B cell (primary cell): ENCODE measurements at regions of chr1 and their contacts with region 1.

Region 1: DNA sequence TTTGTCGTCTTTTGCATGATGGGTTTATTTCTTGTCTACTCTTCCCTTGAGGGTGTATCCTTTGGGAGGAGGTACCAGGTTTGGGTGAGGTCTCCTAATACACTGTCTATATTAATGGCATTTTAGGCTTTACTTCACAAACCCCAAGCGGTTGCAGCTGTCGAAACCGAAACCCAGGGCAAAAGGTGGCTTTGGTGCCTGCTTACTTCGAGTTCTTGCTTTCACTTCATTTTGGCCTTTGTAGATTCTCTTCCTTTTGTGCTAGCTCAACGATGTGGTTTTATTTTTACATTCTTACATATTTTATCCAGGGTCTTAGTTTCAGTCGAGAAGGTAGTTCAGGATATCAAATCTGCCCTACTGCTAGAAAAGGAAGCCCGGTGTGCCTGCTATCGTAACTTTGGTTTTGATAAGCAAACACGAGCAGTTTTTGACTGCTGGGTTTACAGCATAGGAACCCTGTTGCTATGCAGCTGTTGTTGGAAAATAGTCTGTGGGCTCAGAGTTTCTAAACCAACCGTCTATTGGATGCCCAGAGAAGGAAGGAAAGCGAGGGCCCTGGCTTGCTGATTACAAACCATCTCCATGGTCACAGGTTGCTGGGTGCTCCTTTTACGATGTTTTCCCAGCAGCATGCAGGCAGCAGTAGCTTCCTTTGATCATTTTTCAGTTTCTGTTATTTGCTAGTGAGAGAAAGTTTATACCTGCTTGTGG is 9.8 kb upstream of the TSPAN2 start:
- DNase-seq: peak; percentile 83
- ATAC-seq: peak; percentile 82
- H3K4me3 ChIP-seq: peak overlapping the region; percentile 52 to 89 (median 58)
- H3K4me3 Mint-ChIP-seq: peak overlapping the region; percentile 92
- H3K27ac ChIP-seq: peak overlapping the region; percentile 97 to 98
- H3K27ac Mint-ChIP-seq: peak overlapping the region; percentile 97
- H3K4me1 ChIP-seq: peaks cover 15 to 20% of the 10 kb centered on the region in 2 donors
- H3K4me1 Mint-ChIP-seq: peaks cover 28% of the 10 kb centered on the region
- H3K27me3 ChIP-seq: no peaks in the 10 kb centered on the region
- H3K27me3 Mint-ChIP-seq: no peaks in the 10 kb centered on the region
- CTCF ChIP-seq: no peak

Region 2: GRCh38 chr1:114979278-114979891 is 119.8 kb before region 1 on chr1:
- CTCF ChIA-PET with region 1: interaction called, 8 read pairs
- POLR2A ChIA-PET with region 1: no interaction called
- intact Hi-C with region 1: loop called (anchors 5 kb)
- DNase-seq: peak; percentile 69
- ATAC-seq: no peak
- H3K4me3 ChIP-seq: no peak overlapping the region
- H3K4me3 Mint-ChIP-seq: no peak overlapping the region
- H3K27ac ChIP-seq: no peak overlapping the region
- H3K27ac Mint-ChIP-seq: no peak overlapping the region
- H3K4me1 ChIP-seq: no peaks in the 10 kb centered on the region
- H3K4me1 Mint-ChIP-seq: no peaks in the 10 kb centered on the region
- H3K27me3 ChIP-seq: peaks cover 0 to 11% (median 2%) of the 10 kb centered on the region in 4 experiments
- H3K27me3 Mint-ChIP-seq: peaks cover 42% of the 10 kb centered on the region
- CTCF ChIP-seq: peak; percentile 97